GM10248 (cell line): ENCODE measurements at regions of chr6 and their contacts with region 1.

Region 1: DNA sequence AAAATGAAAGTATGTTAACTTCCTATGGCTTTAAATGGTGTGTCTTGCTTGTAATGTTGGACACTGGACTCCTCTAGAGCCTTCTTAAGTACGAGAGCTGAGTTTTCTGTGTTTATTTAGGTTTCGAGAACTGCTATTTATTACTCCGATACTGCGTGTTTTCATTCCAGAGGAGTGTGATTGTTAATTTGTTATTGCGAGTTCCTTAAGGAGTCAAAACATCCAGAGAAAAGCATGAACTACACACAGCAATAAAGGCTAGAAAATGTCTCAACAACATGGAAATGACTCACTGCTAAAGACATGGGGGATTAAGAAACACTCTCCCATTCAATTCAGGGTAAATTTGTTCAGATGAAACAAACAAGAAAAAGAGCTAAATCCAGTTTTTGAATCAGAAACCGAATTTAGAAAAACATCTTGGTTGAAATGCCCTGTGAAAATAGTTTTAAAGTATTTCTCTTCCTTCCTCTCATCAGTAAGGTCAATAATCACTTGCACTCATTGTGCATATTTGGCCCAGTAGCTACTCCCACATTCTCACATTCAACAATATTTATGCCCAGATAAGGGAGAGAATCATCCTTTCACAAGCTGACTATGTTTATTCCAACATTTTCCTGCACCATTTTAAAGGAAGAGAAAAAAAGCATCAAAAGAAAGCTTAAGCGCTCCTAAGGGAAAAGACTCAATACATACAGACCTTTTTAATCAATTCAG is 36.0 kb downstream of the ATXN1 start:
- DNase-seq: no peak
- CTCF ChIP-seq: no peak

Region 2: GRCh38 chr6:16739329-16739801 is 14.1 kb after region 1 on chr6:
- CTCF ChIA-PET with region 1: interaction called, 11 read pairs
- POLR2A ChIA-PET with region 1: no interaction called
- DNase-seq: no peak
- CTCF ChIP-seq: no peak